T-cell (primary cell): ENCODE measurements at regions of chr7 and their contacts with region 1.

Region 1: DNA sequence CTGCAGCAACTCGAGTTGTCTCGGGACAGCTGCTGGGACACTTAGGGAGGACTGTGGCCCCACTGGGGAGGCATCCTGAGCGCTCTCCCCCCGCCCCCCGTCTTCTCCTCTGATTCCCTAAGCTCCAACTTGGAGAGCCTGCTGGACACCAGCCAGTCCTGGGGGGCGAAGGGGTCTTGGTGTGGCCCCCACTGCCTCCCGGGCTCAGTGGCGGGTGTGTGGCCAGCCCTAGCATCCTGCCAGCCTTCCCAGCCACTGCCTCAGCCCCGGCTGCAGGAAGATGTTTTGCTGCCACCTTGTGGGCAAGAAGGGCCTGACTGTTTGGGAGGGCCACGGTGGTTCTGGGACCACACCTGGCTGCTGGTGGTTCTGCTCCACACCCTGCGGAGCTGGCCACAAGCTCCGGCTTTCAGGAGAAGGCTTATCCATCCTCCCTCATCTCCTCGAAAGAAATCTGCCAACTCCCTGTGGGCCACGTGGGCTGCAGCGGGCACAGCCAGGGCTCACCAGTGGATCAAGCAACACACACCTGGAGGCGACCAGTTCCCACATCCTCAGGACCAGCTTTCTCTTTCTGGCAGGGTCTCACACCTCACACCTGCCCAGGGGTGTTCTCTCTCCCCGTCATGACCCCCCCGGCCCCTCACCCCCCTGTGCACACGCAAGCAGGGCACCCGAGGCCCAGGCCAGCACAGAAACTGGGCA is 24.8 kb downstream of the AGAP3 start:
- DNase-seq: peak; percentile 36 to 85 (median 65)
- ATAC-seq: peak; percentile 63 to 78 (median 70)
- H3K4me3 ChIP-seq: no peak overlapping the region
- H3K4me3 Mint-ChIP-seq: no peak overlapping the region
- H3K27ac ChIP-seq: no peak overlapping the region
- H3K27ac Mint-ChIP-seq: no peak overlapping the region
- H3K4me1 ChIP-seq: peaks cover 2 to 17% of the 10 kb centered on the region in 2 experiments
- H3K4me1 Mint-ChIP-seq: peaks cover 5 to 12% (median 6%) of the 10 kb centered on the region in 3 donors
- H3K27me3 ChIP-seq: peaks cover 0 to 27% of the 10 kb centered on the region in 2 experiments
- H3K27me3 Mint-ChIP-seq: peaks cover 0 to 13% of the 10 kb centered on the region in 2 donors

Region 2: DNA sequence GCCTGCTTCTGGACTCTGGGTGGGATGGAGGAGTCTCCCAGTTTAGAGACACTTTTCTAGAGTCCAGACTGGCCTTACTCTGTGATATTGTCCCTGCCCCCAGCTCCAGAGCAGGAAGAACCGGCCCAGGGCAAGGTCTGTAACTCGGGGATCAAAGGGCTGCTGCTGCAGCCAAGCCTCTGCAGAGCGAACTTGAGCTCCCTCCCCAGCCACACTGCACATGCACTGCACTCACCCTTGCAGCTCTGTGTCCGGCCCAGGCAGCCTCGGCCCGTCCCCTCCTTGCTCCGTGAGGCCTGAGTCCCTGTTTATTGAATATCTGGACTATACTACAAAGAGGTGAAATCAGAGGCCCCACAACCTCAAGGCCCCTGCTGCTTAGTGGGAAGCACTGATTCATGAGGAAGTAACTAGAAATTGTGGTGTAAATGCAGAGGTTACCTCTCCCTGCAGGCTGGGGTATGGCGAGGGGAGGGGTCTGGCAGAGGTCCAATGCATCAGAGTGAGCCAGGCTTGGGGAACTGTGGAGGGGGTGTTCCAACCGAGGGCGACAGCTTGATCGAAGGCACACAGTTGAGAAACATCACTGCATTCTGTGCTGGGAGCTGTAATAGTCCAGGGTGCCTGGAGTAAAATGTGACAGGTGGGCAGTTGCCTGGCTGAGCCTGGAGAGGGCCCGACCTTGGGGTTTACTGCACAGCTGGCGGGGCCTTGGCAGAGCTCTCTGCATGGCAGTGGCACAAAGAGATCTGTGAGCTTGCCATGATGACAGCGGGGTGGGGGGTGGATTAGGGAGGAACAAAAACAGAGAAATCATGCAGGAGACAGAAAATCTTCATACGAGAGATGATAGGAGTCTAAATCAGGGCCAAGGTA is 209.7 kb before region 1 on chr7:
- CTCF ChIA-PET with region 1: interaction called, 3 to 13 read pairs
- POLR2A ChIA-PET with region 1: no interaction called
- DNase-seq: no peak
- ATAC-seq: no peak
- H3K4me3 ChIP-seq: no peak overlapping the region
- H3K4me3 Mint-ChIP-seq: no peak overlapping the region
- H3K27ac ChIP-seq: no peak overlapping the region
- H3K27ac Mint-ChIP-seq: no peak overlapping the region
- H3K4me1 ChIP-seq: peaks cover 0 to 9% of the 10 kb centered on the region in 2 experiments
- H3K4me1 Mint-ChIP-seq: peaks cover 5 to 15% (median 8%) of the 10 kb centered on the region in 3 donors
- H3K27me3 ChIP-seq: peaks cover 0 to 72% of the 10 kb centered on the region in 2 experiments
- H3K27me3 Mint-ChIP-seq: peaks cover 49 to 63% of the 10 kb centered on the region in 2 donors

Region 3: DNA sequence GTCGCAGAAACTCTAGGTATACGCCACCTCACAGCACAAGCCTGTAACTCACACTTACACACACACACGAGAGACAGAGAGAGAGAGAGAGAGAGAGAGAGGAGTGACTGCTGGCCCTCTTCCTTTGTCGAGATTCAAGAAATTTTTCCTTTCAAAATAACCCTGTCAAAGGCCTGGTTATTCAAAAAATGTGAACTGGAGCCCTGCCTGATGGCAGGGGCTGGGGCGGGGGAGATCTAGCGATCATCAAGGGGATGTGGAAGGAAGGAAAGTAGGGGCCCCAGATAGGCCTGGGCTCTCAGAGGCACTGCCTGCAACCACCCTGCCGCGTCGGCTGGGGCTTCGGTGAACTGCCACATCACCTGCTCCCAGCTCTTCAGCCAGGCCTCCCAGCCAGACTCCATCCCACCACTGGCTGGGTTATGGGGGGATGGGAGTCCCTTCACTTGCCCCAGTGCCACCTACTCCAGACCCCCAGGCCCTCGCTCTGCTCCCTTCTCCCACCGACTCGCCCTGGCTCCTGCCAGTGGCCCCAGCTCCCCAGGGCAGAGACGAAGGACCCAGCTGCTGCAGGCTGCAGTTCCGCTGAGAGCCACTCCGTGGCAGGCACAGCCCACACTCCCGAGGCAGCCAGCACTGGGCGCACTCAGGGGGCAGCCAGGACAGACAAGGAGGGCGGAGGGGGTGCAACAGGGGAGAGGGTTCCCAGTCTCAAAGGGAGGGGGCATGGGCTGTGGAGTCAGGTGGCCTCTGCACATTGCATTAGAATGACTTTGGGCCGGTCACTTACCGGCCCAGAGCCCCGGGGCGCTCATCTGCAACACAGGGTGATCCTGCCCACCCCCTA is 148.3 kb before region 1 on chr7:
- CTCF ChIA-PET with region 1: interaction called, 5 to 15 read pairs
- POLR2A ChIA-PET with region 1: no interaction called
- DNase-seq: peak in 33 of 35 experiments; percentile 22 to 76 (median 50)
- ATAC-seq: peak; percentile 80 to 96 (median 84)
- H3K4me3 ChIP-seq: no peak overlapping the region
- H3K4me3 Mint-ChIP-seq: peak overlapping the region in 1 of 3 donors; percentile 6
- H3K27ac ChIP-seq: no peak overlapping the region
- H3K27ac Mint-ChIP-seq: no peak overlapping the region
- H3K4me1 ChIP-seq: peaks cover 9 to 22% of the 10 kb centered on the region in 2 experiments
- H3K4me1 Mint-ChIP-seq: peaks cover 12 to 23% (median 17%) of the 10 kb centered on the region in 3 donors
- H3K27me3 ChIP-seq: peaks cover 2 to 70% of the 10 kb centered on the region in 2 experiments
- H3K27me3 Mint-ChIP-seq: peaks cover 14 to 33% of the 10 kb centered on the region in 2 donors